Heart right ventricle (tissue), 16 donors: ENCODE measurements at regions of chr12 and their contacts with region 1.

Region 1: DNA sequence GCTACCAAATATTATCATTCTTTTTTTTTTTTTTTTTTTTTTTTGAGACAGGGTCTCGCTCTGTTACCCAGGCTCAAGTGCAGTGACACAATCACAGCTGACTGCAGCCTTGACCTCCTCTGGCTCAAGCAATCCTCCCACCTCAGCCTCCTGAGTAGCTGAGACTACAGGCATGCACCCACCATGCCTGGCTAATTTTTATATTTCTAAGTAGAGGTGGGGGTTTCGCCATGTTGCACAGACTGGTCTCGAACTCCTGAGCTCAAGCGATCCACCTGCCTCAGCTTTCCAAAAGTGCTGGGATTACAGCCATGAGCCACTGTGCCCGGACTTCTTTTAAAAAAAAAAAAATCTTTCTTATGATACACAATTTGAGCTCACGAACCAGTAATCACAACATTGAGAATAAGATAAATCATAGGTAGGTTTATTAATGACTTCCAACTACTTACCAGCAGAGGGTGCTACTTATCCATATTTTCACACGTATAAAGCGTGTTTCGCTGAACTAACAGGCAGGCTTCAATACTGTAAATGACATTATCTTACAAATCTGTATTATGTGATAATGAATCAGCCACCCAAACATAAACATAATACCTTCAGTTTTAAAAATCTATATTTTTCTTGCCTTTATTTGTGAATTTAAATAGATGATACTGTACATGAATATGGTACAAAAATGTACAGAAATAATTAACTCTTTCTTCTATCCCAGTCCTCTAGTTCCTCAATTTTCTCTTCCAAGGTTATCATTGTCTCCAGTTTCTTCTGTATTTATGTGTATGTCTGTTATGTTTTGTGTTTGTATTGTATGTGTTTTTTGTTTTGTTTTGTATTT is 42.5 kb upstream of the BCAT1 start:
- DNase-seq: no peak
- ATAC-seq: peak in 7 of 8 donors; percentile 69 to 83 (median 76)
- H3K4me3 ChIP-seq: no peak overlapping the region
- H3K27ac ChIP-seq: no peak overlapping the region
- H3K4me1 ChIP-seq: no peaks in the 10 kb centered on the region
- H3K27me3 ChIP-seq: peaks cover 0 to 10% (median 0%) of the 10 kb centered on the region in 7 donors
- CTCF ChIP-seq: peak; percentile 34 to 74 (median 69)

Region 2: GRCh38 chr12:25130741-25131188 is 139.3 kb after region 1 on chr12:
- intact Hi-C with region 1: loop called (anchors 1 to 5 kb)
- DNase-seq: no peak
- ATAC-seq: no peak
- H3K4me3 ChIP-seq: no peak overlapping the region
- H3K27ac ChIP-seq: no peak overlapping the region
- H3K4me1 ChIP-seq: no peaks in the 10 kb centered on the region
- H3K27me3 ChIP-seq: no peaks in the 10 kb centered on the region
- CTCF ChIP-seq: peak; percentile 50 to 84 (median 75)

Region 3: DNA sequence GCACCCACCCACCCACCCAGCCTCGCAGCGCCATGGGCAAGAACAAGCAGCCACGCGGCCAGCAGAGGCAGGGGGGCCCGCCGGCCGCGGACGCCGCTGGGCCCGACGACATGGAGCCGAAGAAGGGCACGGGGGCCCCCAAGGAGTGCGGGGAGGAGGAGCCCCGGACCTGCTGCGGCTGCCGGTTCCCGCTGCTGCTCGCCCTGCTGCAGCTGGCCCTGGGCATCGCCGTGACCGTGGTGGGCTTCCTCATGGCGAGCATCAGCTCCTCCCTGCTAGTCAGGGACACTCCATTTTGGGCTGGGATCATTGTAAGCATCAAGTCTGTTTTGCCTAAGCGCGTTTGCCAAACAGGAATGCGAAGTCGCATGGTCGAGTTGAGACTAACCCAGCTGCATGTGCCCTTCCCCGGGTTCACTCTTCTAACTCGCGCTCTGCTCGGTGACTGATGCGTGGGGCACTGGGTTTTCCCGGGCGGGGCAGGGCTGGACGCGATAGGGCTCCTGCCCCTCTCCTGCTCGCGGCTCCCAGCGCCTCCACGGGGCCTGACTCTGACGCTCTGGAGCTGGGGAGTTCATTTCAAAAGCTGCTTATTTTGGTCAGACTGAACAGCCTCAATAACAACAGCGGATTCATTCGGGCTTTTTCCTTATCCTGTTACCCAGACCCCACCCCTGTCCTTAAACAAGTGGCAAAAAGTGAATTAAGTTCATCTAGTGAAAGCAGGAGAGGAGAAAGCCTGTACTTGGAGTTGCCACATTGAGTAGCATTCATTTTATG is 1204.4 kb after region 1 on chr12:
- intact Hi-C with region 1: no loop called
- DNase-seq: peak; percentile 47 to 51
- ATAC-seq: peak; percentile 77 to 91 (median 86)
- H3K4me3 ChIP-seq: peak overlapping the region; percentile 49 to 81 (median 68)
- H3K27ac ChIP-seq: peak overlapping the region; percentile 67 to 95 (median 87)
- H3K4me1 ChIP-seq: peaks cover 0 to 47% (median 26%) of the 10 kb centered on the region in 9 donors
- H3K27me3 ChIP-seq: peaks cover 0 to 31% (median 0%) of the 10 kb centered on the region in 7 donors
- CTCF ChIP-seq: peak in 2 of 9 donors; percentile 10 to 11